ENCODE measurements at regions of chr15 and their contacts with region 1.

Region 1: DNA sequence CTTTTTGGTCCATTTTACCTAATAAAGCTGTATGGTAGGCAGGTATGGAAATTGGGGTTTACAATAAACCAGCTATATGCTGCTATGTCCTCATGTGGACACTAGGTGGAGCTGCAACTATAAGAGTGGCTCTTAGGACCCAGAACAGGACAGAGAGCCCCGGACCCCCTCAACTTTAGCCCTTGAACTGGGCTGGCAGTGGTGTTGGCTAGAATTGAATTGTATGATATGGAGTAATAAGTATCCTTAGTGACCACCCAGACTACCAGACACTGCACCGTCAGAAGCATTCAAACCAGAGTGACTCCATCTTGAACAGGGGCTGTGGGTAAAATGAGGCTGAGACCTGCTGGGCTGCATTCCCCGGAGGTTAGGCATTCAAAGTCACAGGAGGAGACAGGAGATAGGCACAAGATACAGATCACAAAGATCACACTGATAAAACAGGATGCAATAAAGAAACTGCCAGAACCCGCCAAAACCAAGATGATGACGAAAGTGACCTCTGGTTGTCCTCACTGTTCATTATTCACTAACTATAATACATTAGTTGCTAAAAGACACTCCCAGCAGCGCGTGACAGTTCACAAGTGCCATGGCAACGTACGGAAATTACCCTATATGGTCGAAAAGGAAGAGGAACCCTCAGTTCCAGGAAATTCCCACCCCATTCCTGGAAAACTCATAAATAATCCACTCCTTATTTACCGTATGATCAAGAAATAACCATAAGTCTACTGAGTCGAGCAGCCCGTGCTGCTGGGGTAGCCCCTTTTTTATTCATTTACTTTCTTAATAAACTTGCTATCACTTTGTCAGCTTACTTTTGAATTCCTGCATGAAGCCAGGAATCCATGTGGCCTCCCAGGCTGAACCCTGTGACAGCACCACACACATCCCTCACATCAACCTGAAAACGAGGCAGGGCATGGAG is 68.7 kb upstream of the BLM start:
- DNase-seq: peak; percentile 90
- H3K4me3 Mint-ChIP-seq: peak overlapping the region; percentile 21
- H3K27ac Mint-ChIP-seq: peak overlapping the region; percentile 92
- H3K4me1 Mint-ChIP-seq: peaks cover 48% of the 10 kb centered on the region
- H3K27me3 Mint-ChIP-seq: no peaks in the 10 kb centered on the region

Region 2: GRCh38 chr15:90367576-90367975 is 280.8 kb before region 1 on chr15:
- CTCF ChIA-PET with region 1: no interaction called
- POLR2A ChIA-PET with region 1: no interaction called
- DNase-seq: no peak
- H3K4me3 Mint-ChIP-seq: no peak overlapping the region
- H3K27ac Mint-ChIP-seq: no peak overlapping the region
- H3K4me1 Mint-ChIP-seq: peaks cover 15% of the 10 kb centered on the region
- H3K27me3 Mint-ChIP-seq: no peaks in the 10 kb centered on the region

Region 3: DNA sequence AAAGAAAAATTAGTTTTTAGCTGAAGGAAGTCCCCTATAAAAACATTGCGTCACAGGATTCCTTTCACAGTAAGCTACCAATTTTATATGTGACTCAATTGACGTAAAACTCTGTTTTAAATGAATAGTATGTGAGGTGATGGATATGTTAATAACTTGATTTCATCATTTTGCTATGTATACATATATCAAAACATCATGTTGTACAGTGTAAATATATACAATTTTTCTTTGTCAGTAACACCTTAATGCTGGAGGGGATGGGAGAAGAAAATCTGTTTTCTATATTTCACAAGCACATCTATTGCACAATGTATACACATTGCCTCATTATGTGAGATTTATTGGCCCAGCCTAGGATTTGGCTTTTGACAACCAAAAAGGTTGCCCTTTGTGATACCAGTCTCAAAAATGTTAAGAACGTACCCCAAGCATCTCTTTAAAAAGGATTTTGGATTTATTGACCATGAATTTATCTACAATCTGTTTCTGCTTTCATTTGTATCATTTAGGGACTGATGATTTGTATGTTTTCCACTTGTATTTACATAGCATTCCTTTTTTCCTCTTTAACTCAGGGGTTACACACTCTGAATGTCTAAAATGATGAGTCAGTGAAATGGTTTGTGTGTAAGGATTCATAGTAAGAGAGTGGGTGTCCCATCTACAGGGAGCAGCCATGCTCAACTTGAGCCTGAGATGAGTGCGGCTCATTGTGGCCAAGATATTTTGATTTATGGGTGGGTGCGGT is 56.1 kb before region 1 on chr15:
- CTCF ChIA-PET with region 1: no interaction called
- POLR2A ChIA-PET with region 1: no interaction called
- DNase-seq: no peak
- H3K4me3 Mint-ChIP-seq: no peak overlapping the region
- H3K27ac Mint-ChIP-seq: peak overlapping the region; percentile 100
- H3K4me1 Mint-ChIP-seq: peaks cover 69% of the 10 kb centered on the region
- H3K27me3 Mint-ChIP-seq: no peaks in the 10 kb centered on the region

Region 4: GRCh38 chr15:90660195-90660998 is 12.0 kb after region 1 on chr15:
- CTCF ChIA-PET with region 1: interaction called, 19 read pairs
- POLR2A ChIA-PET with region 1: interaction called, 42 read pairs
- DNase-seq: peak; percentile 85
- H3K4me3 Mint-ChIP-seq: peak overlapping the region; percentile 67
- H3K27ac Mint-ChIP-seq: peak overlapping the region; percentile 83
- H3K4me1 Mint-ChIP-seq: peaks cover 84% of the 10 kb centered on the region
- H3K27me3 Mint-ChIP-seq: peaks cover 29% of the 10 kb centered on the region

Region 5: GRCh38 chr15:90665288-90666134 is 17.1 kb after region 1 on chr15:
- CTCF ChIA-PET with region 1: interaction called, 19 read pairs
- POLR2A ChIA-PET with region 1: interaction called, 42 read pairs
- DNase-seq: peak; percentile 81
- H3K4me3 Mint-ChIP-seq: peak overlapping the region; percentile 82
- H3K27ac Mint-ChIP-seq: peak overlapping the region; percentile 94
- H3K4me1 Mint-ChIP-seq: peaks cover 60% of the 10 kb centered on the region
- H3K27me3 Mint-ChIP-seq: peaks cover 21% of the 10 kb centered on the region

Region 6: GRCh38 chr15:90677807-90678790 is 29.7 kb after region 1 on chr15:
- CTCF ChIA-PET with region 1: interaction called, 13 read pairs
- POLR2A ChIA-PET with region 1: interaction called, 8 read pairs
- DNase-seq: no peak
- H3K4me3 Mint-ChIP-seq: peak overlapping the region; percentile 38
- H3K27ac Mint-ChIP-seq: peak overlapping the region; percentile 94
- H3K4me1 Mint-ChIP-seq: peaks cover 44% of the 10 kb centered on the region
- H3K27me3 Mint-ChIP-seq: peaks cover 11% of the 10 kb centered on the region

Region 7: GRCh38 chr15:90686435-90687218 is 38.2 kb after region 1 on chr15:
- CTCF ChIA-PET with region 1: interaction called, 27 read pairs
- POLR2A ChIA-PET with region 1: interaction called, 13 read pairs
- DNase-seq: peak; percentile 56
- H3K4me3 Mint-ChIP-seq: peak overlapping the region; percentile 15
- H3K27ac Mint-ChIP-seq: peak overlapping the region; percentile 100
- H3K4me1 Mint-ChIP-seq: peaks cover 54% of the 10 kb centered on the region
- H3K27me3 Mint-ChIP-seq: no peaks in the 10 kb centered on the region

Region 8: GRCh38 chr15:90691982-90692773 is 43.8 kb after region 1 on chr15:
- CTCF ChIA-PET with region 1: interaction called, 27 read pairs
- POLR2A ChIA-PET with region 1: interaction called, 13 read pairs
- DNase-seq: no peak
- H3K4me3 Mint-ChIP-seq: no peak overlapping the region
- H3K27ac Mint-ChIP-seq: peak overlapping the region; percentile 11
- H3K4me1 Mint-ChIP-seq: peaks cover 69% of the 10 kb centered on the region
- H3K27me3 Mint-ChIP-seq: no peaks in the 10 kb centered on the region

Region 9: GRCh38 chr15:90697181-90697580 is 48.8 kb after region 1 on chr15:
- CTCF ChIA-PET with region 1: interaction called, 27 read pairs
- POLR2A ChIA-PET with region 1: interaction called, 7 read pairs
- DNase-seq: peak; percentile 70
- H3K4me3 Mint-ChIP-seq: no peak overlapping the region
- H3K27ac Mint-ChIP-seq: peak overlapping the region; percentile 86
- H3K4me1 Mint-ChIP-seq: peaks cover 51% of the 10 kb centered on the region
- H3K27me3 Mint-ChIP-seq: no peaks in the 10 kb centered on the region